Motor neuron (in vitro differentiated cells): ENCODE measurements at regions of chr16 and their contacts with region 1.

Region 1: GRCh38 chr16:23398987-23399805 is 53.8 kb downstream of the COG7 start:
- ATAC-seq: peak in 5 of 8 experiments; percentile 21 to 71 (median 52)
- H3K4me3 ChIP-seq: no peak overlapping the region
- H3K27ac ChIP-seq: no peak overlapping the region
- H3K4me1 ChIP-seq: peaks cover 0 to 6% of the 10 kb centered on the region in 2 donors

Region 2: GRCh38 chr16:23496826-23497542 is 97.8 kb after region 1 on chr16:
- in situ Hi-C with region 1: loop called in 1 of 9 experiments (anchors 25 kb)
- ATAC-seq: peak in 5 of 8 experiments; percentile 33 to 87 (median 57)
- H3K4me3 ChIP-seq: no peak overlapping the region
- H3K27ac ChIP-seq: no peak overlapping the region
- H3K4me1 ChIP-seq: no peaks in the 10 kb centered on the region